Caco-2 (cell line): ENCODE measurements at regions of chr13 and their contacts with region 1.

Region 1: GRCh38 chr13:108834193-108834592 is 204.8 kb downstream of the MYO16 start:
- DNase-seq: peak; percentile 49 to 71
- H3K4me3 ChIP-seq: no peak overlapping the region
- H3K4me3 Mint-ChIP-seq: peak overlapping the region; percentile 4
- H3K27ac Mint-ChIP-seq: peak overlapping the region; percentile 77
- H3K4me1 ChIP-seq: peaks cover 16% of the 10 kb centered on the region
- H3K4me1 Mint-ChIP-seq: peaks cover 13% of the 10 kb centered on the region
- H3K27me3 ChIP-seq: no peaks in the 10 kb centered on the region
- H3K27me3 Mint-ChIP-seq: no peaks in the 10 kb centered on the region
- CTCF ChIP-seq: no peak

Region 2: GRCh38 chr13:108533842-108534241 is 300.4 kb before region 1 on chr13:
- CTCF ChIA-PET with region 1: no interaction called
- POLR2A ChIA-PET with region 1: no interaction called
- intact Hi-C with region 1: no loop called
- DNase-seq: no peak
- H3K4me3 ChIP-seq: no peak overlapping the region
- H3K4me3 Mint-ChIP-seq: no peak overlapping the region
- H3K27ac Mint-ChIP-seq: no peak overlapping the region
- H3K4me1 ChIP-seq: no peaks in the 10 kb centered on the region
- H3K4me1 Mint-ChIP-seq: no peaks in the 10 kb centered on the region
- H3K27me3 ChIP-seq: no peaks in the 10 kb centered on the region
- H3K27me3 Mint-ChIP-seq: peaks cover 8% of the 10 kb centered on the region
- CTCF ChIP-seq: no peak

Region 3: DNA sequence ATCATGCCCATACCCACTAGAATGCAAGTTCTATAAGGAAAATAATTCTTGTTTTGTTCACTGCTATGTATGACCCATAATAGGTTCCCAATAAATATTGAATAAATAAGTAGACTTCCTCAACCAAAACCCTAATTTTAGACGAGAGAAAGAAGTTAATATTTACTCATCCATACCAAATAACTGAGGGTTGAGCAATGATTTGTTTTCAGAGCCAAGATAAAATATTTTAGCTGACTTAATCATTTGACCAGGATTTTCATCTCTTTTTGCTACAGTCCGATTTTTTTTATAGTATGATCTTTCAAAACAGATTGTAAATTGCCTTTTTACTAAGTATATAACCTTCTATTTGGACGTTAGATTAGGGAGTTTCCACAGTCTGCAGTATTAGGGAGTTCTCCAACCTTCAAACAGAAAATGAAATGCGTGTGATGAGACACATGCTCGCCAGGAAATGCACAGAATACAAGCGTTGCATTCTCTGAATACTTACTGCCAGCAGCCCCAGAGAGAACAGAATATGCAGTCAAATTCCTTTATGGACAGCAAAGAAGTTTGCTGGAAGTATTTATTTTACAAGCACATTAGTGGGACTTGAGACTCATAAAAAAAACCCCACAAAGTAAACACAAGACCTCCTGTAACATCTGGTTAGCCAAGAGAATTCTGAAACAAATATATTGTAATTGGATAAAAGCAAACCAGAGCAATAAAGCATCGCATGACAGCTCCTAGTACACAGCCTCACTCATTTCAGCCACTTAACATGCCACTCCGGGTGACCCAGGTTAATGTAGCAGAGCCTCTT is 25.2 kb after region 1 on chr13:
- CTCF ChIA-PET with region 1: no interaction called
- POLR2A ChIA-PET with region 1: no interaction called
- intact Hi-C with region 1: loop called (anchors 2 kb)
- DNase-seq: peak in 1 of 2 experiments; percentile 5
- H3K4me3 ChIP-seq: no peak overlapping the region
- H3K4me3 Mint-ChIP-seq: peak overlapping the region; percentile 50
- H3K27ac Mint-ChIP-seq: peak overlapping the region; percentile 43
- H3K4me1 ChIP-seq: no peaks in the 10 kb centered on the region
- H3K4me1 Mint-ChIP-seq: peaks cover 20% of the 10 kb centered on the region
- H3K27me3 ChIP-seq: no peaks in the 10 kb centered on the region
- H3K27me3 Mint-ChIP-seq: no peaks in the 10 kb centered on the region
- CTCF ChIP-seq: no peak